HEK293T (cell line): ENCODE measurements at regions of chr13 and their contacts with region 1.

Region 1: DNA sequence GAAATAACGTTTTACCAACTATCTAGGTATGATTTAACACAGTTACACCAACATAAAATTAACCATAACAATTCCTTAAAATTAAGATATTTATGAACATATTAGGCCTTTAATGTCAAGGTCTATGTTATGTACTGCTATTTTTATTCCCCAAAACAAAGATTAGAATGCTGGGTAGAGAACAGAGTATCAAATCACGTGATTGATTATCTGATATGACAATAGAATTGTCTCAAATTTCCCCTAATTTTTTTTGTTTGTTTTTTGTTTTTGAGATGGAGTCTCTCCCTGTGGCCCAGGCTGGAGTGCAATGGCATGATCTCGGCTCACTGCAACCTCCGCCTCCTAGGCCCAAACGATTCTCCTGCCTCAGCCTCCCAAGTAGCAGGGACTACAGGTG is 368.7 kb upstream of the PCDH9 start:
- DNase-seq: no peak

Region 2: DNA sequence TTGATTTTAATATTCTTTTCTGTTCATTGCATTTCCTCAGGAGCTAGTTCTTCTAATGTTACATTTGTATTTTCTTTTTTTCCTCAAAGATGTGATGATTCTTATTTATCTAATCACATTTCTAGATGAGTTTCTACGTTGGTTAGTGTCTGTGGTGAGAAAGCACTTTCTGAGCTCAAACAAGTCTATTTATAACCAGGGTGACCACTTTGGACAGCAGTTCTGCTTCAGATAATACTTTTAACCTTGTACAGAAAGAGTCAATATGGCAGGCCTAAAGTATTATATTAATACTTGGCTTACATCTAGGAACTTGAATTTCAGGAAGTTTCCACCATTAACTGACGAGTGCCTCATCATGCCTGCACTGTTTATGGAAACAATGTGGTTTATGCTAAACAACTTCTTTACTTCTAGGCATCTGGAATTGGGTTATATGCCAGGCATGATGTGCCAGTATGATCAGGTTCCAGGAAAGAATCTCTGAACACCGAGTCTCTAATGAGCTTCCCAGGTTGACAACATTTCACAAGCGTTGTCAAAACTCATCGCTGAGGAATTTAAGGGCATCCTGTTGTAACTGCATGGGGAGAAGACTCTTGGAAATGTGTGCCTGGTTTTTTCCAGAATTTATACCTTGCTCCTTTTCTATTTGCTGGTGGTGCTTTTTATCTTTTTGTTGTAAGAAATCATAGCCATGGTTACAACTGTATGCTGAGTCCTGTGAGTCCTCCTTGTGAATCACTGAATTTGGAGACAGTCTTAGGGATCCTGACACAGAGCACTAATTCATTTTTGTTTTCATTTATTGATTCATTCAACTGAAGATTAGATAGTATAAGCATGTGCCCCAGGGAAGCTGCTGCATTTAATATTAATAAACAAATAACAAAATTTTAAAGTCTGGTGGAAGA is 24.2 kb before region 1 on chr13:
- CTCF ChIA-PET with region 1: no interaction called
- POLR2A ChIA-PET with region 1: no interaction called
- DNase-seq: no peak

Region 3: GRCh38 chr13:67588607-67589006 is 10.2 kb before region 1 on chr13:
- CTCF ChIA-PET with region 1: no interaction called
- POLR2A ChIA-PET with region 1: no interaction called
- DNase-seq: no peak

Region 4: GRCh38 chr13:67632590-67632989 is 33.8 kb after region 1 on chr13:
- CTCF ChIA-PET with region 1: no interaction called
- POLR2A ChIA-PET with region 1: no interaction called
- DNase-seq: no peak

Region 5: GRCh38 chr13:68007578-68007977 is 408.8 kb after region 1 on chr13:
- CTCF ChIA-PET with region 1: interaction called, 12 read pairs
- POLR2A ChIA-PET with region 1: no interaction called
- DNase-seq: no peak